Activated CD4-positive, alpha-beta T cell treated with anti-CD3 and anti-CD28 coated beads for 36 hours (primary cell): ENCODE measurements at regions of chr17 and their contacts with region 1.

Region 1: GRCh38 chr17:46193626-46194392 is 580 bp upstream of the KANSL1 start:
- DNase-seq: peak; percentile 96
- ATAC-seq: peak; percentile 83
- H3K4me3 Mint-ChIP-seq: peak overlapping the region; percentile 74
- H3K27ac Mint-ChIP-seq: peak overlapping the region; percentile 94
- H3K4me1 Mint-ChIP-seq: peaks cover 56% of the 10 kb centered on the region
- H3K27me3 Mint-ChIP-seq: no peaks in the 10 kb centered on the region

Region 2: DNA sequence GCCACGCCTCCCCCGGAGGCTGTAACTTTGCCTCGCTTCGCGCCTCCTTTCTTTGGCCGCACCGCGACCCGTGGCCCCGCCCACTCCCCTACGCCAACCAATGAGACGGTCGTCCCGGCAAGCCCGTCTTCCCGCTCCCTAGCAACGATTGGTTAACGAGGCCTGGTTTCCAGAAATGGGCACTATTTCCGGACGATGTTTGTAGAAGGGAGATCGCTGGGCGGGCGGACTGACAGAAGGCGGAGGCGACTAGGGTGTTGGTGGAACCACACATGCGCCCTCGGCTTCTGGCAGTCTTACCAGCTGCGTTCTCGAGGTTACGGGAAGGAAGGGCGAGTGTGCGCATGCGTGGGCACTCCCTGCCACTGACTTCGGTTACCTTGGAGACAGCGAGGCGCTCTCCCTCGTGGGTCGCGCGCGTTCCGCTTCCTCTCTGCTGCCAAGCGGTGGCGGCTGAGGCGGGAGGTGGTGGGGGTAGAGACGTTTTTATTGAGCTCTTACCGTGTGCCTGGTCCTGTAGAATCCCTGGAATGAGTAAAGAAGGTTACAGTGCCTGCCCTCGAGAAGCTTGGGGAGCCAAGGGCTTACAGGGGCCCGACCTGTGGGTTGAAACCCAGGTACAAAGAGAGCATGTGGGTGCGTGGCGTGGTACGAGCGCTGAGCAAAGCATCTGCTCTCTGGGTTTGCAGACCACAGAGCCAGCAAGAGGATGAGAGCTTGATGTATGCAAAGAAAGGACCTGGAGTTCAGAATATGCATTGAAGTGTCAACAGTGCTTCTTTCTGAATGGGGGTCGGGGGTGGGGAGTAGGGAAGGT is 876.5 kb before region 1 on chr17:
- CTCF ChIA-PET with region 1: no interaction called
- POLR2A ChIA-PET with region 1: no interaction called
- intact Hi-C with region 1: loop called in 1 of 2 experiments (anchors 10 kb)
- DNase-seq: peak; percentile 100
- ATAC-seq: peak; percentile 81
- H3K4me3 Mint-ChIP-seq: peak overlapping the region; percentile 91
- H3K27ac Mint-ChIP-seq: peak overlapping the region; percentile 89
- H3K4me1 Mint-ChIP-seq: peaks cover 65% of the 10 kb centered on the region
- H3K27me3 Mint-ChIP-seq: no peaks in the 10 kb centered on the region

Region 3: DNA sequence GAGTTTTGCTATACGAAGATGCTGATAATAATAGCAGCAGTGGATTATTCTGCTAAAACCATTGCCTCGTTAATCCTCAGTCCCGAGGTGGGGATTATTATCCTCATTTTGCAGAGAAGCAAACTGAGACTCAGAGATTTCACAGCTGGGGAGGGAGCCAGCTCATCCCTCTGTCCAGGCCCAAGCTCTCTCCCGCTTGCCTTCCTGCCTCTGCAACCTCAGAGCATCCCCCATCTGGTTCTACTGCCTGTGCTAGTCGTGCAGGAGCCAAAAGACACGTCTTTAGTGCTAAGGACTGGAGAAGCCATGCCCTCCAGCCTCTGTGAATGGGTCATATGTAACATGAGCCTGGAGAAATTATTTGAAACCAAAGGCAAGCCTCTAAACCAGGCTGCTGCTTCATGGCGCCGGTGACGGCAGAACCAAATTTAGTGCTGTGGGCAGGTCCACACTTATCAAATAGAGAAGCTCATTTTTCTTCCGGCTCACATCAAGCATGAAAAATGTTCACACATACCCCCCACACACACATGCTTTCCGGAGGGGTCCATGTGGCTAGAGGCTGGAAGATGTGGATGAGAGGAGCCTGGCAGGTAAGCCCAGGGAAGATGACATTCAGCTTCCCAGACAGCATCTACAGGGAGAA is 285.9 kb before region 1 on chr17:
- CTCF ChIA-PET with region 1: no interaction called
- POLR2A ChIA-PET with region 1: no interaction called
- intact Hi-C with region 1: no loop called
- DNase-seq: no peak
- ATAC-seq: no peak
- H3K4me3 Mint-ChIP-seq: no peak overlapping the region
- H3K27ac Mint-ChIP-seq: no peak overlapping the region
- H3K4me1 Mint-ChIP-seq: peaks cover 22% of the 10 kb centered on the region
- H3K27me3 Mint-ChIP-seq: peaks cover 15% of the 10 kb centered on the region

Region 4: GRCh38 chr17:46056800-46057304 is 137.0 kb before region 1 on chr17:
- CTCF ChIA-PET with region 1: interaction called, 5 read pairs
- POLR2A ChIA-PET with region 1: interaction called, 6 read pairs
- intact Hi-C with region 1: loop called in 1 of 2 experiments (anchors 2 kb)
- DNase-seq: no peak
- ATAC-seq: no peak
- H3K4me3 Mint-ChIP-seq: no peak overlapping the region
- H3K27ac Mint-ChIP-seq: no peak overlapping the region
- H3K4me1 Mint-ChIP-seq: peaks cover 43% of the 10 kb centered on the region
- H3K27me3 Mint-ChIP-seq: no peaks in the 10 kb centered on the region

Region 5: GRCh38 chr17:46139432-46140210 is 54.2 kb before region 1 on chr17:
- CTCF ChIA-PET with region 1: interaction called, 11 read pairs
- POLR2A ChIA-PET with region 1: interaction called, 3 read pairs
- intact Hi-C with region 1: loop called (anchors 5 kb)
- DNase-seq: no peak
- ATAC-seq: no peak
- H3K4me3 Mint-ChIP-seq: no peak overlapping the region
- H3K27ac Mint-ChIP-seq: no peak overlapping the region
- H3K4me1 Mint-ChIP-seq: peaks cover 91% of the 10 kb centered on the region
- H3K27me3 Mint-ChIP-seq: no peaks in the 10 kb centered on the region

Region 6: DNA sequence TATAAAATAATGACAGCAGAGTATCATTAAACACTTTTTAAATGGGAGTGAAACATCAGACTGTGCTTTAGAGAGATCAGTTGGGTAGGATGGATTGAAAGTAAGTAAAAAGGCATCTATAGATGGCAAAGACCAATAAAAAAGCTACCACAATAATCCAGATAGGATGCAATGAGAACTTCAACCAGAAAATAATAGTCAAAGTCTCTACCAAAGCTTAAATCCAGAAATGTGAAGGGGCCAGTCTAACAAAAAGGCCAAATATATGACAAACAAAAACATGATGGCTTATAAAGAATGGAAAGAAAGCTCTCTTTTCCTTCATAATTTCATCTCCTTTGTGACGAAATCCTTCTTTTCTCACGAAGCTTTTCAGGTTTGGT is 12.9 kb before region 1 on chr17:
- CTCF ChIA-PET with region 1: interaction called, 11 read pairs
- POLR2A ChIA-PET with region 1: interaction called, 4 read pairs
- intact Hi-C with region 1: no loop called
- DNase-seq: no peak
- ATAC-seq: no peak
- H3K4me3 Mint-ChIP-seq: no peak overlapping the region
- H3K27ac Mint-ChIP-seq: no peak overlapping the region
- H3K4me1 Mint-ChIP-seq: peaks cover 91% of the 10 kb centered on the region
- H3K27me3 Mint-ChIP-seq: no peaks in the 10 kb centered on the region

Region 7: GRCh38 chr17:46266656-46267544 is 73.1 kb after region 1 on chr17:
- CTCF ChIA-PET with region 1: interaction called, 6 read pairs
- POLR2A ChIA-PET with region 1: no interaction called
- intact Hi-C with region 1: loop called in 1 of 2 experiments (anchors 2 kb)
- DNase-seq: peak; percentile 90
- ATAC-seq: peak; percentile 85
- H3K4me3 Mint-ChIP-seq: peak overlapping the region; percentile 76
- H3K27ac Mint-ChIP-seq: peak overlapping the region; percentile 74
- H3K4me1 Mint-ChIP-seq: peaks cover 34% of the 10 kb centered on the region
- H3K27me3 Mint-ChIP-seq: no peaks in the 10 kb centered on the region